Activated CD4-positive, alpha-beta T cell treated with anti-CD3 and anti-CD28 coated beads, Interleukin-2, amount 10 ng/mL, durations not matched to agents 24 days and 14 days (primary cell): ENCODE measurements at regions of chr14 and their contacts with region 1.

Region 1: GRCh38 chr14:91138511-91139359 is 24.9 kb downstream of the DGLUCY start:
- DNase-seq: peak; percentile 88
- H3K4me3 Mint-ChIP-seq: no peak overlapping the region
- H3K27ac Mint-ChIP-seq: peak overlapping the region; percentile 42
- H3K4me1 Mint-ChIP-seq: peaks cover 48% of the 10 kb centered on the region
- H3K27me3 Mint-ChIP-seq: no peaks in the 10 kb centered on the region

Region 2: GRCh38 chr14:90903101-90903500 is 235.6 kb before region 1 on chr14:
- intact Hi-C with region 1: loop called (anchors 10 kb)
- DNase-seq: peak; percentile 89
- H3K4me3 Mint-ChIP-seq: no peak overlapping the region
- H3K27ac Mint-ChIP-seq: no peak overlapping the region
- H3K4me1 Mint-ChIP-seq: peaks cover 30% of the 10 kb centered on the region
- H3K27me3 Mint-ChIP-seq: no peaks in the 10 kb centered on the region

Region 3: GRCh38 chr14:91078095-91078737 is 60.5 kb before region 1 on chr14:
- intact Hi-C with region 1: loop called (anchors 2 kb)
- DNase-seq: peak; percentile 91
- H3K4me3 Mint-ChIP-seq: peak overlapping the region; percentile 45
- H3K27ac Mint-ChIP-seq: peak overlapping the region; percentile 61
- H3K4me1 Mint-ChIP-seq: peaks cover 36% of the 10 kb centered on the region
- H3K27me3 Mint-ChIP-seq: no peaks in the 10 kb centered on the region

Region 4: GRCh38 chr14:91114079-91115065 is 24.4 kb before region 1 on chr14:
- intact Hi-C with region 1: loop called (anchors 2 kb)
- DNase-seq: peak; percentile 93
- H3K4me3 Mint-ChIP-seq: peak overlapping the region; percentile 93
- H3K27ac Mint-ChIP-seq: peak overlapping the region; percentile 97
- H3K4me1 Mint-ChIP-seq: peaks cover 61% of the 10 kb centered on the region
- H3K27me3 Mint-ChIP-seq: no peaks in the 10 kb centered on the region